PC-9 (cell line): ENCODE measurements at regions of chr18 and their contacts with region 1.

Region 1: GRCh38 chr18:26121476-26121875 is 12.2 kb upstream of the PSMA8 start:
- DNase-seq: no peak
- H3K4me3 ChIP-seq: no peak overlapping the region
- H3K27ac ChIP-seq: no peak overlapping the region
- H3K4me1 ChIP-seq: no peaks in the 10 kb centered on the region
- H3K27me3 ChIP-seq: no peaks in the 10 kb centered on the region
- CTCF ChIP-seq: no peak

Region 2: DNA sequence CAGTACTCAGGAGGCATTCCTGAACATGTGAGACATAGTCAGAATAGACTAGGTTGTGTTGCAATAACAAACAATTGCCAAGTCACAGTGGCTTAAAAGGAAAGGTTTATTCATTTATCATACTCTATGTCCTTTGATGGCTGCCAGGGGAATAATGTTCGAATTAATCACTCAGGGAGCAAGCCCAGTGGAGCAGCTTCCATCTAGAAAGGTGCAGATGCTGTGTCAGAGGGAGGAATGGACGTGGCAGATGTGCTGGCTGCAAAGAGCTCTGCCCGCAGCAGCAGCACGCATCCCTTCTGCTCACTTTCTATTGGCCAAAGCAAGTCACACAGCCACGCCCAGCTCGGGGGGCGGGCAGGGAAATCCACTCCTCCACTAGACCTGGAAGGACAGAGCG is 849.9 kb after region 1 on chr18:
- CTCF ChIA-PET with region 1: no interaction called
- POLR2A ChIA-PET with region 1: no interaction called
- intact Hi-C with region 1: no loop called
- DNase-seq: no peak
- H3K4me3 ChIP-seq: no peak overlapping the region
- H3K27ac ChIP-seq: no peak overlapping the region
- H3K4me1 ChIP-seq: no peaks in the 10 kb centered on the region
- H3K27me3 ChIP-seq: no peaks in the 10 kb centered on the region
- CTCF ChIP-seq: no peak

Region 3: DNA sequence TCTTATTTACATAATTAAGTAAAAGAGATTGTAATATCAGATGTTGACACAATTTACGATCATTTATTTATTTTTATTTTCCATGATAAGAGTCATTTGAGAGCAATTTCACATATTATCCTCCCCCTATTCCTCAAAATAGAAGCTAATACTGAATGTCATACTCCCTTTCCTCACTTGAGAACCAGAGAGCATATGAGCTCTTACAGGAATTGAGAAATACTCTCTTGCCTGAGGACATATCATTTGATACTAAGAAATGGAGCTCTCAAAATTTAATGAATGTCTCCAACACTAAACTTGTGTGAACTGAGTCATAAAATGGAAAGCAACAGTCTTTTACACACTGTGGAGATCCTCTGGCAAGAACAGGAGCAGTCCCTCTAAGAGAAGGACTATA is 1132.1 kb after region 1 on chr18:
- CTCF ChIA-PET with region 1: interaction called, 10 read pairs
- POLR2A ChIA-PET with region 1: no interaction called
- intact Hi-C with region 1: no loop called
- DNase-seq: no peak
- H3K4me3 ChIP-seq: no peak overlapping the region
- H3K27ac ChIP-seq: no peak overlapping the region
- H3K4me1 ChIP-seq: no peaks in the 10 kb centered on the region
- H3K27me3 ChIP-seq: no peaks in the 10 kb centered on the region
- CTCF ChIP-seq: no peak